ENCODE measurements at regions of chr17 and their contacts with region 1.

Region 1: GRCh38 chr17:44210342-44211192 is 8.9 kb downstream of the UBTF start:
- DNase-seq: peak; percentile 96
- ATAC-seq: peak; percentile 84
- H3K4me3 Mint-ChIP-seq: peak overlapping the region; percentile 79
- H3K27ac Mint-ChIP-seq: peak overlapping the region; percentile 98
- H3K4me1 Mint-ChIP-seq: peaks cover 60% of the 10 kb centered on the region
- H3K27me3 Mint-ChIP-seq: no peaks in the 10 kb centered on the region

Region 2: DNA sequence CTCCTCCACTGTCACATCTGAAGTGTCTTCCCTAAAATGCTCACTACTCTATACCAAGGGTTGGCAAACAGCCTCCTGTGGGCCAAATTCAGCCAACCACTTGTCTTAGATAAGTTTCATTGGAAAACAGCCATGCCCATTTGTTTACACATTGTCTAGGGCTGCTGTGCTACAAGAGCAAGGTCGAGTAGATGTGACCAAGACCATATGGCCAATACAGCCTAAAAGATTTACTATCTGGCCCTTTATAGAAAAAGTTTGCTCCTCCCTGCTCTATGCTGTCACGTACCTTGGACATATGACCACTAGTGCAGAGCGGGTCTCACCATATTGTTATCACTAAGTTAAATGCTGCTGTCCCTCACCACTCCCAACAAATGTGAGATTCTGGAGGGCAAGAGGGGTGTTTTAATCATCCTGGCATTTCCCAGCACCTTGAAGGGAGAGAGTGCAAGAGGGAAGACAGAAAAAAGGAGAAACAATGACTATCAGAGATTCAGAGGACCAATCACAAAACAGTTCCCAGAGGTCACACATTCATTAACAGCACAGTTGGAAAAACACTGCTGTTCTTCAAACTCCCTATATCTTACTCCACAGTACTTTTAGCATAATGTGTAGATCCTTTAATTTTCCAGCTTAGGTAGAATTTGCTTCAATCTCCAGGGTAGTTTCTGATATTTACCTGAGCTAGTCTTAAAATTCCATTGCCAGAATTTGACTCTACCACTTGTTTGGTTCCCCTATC is 157.3 kb before region 1 on chr17:
- CTCF ChIA-PET with region 1: no interaction called
- POLR2A ChIA-PET with region 1: no interaction called
- intact Hi-C with region 1: no loop called
- DNase-seq: no peak
- ATAC-seq: no peak
- H3K4me3 Mint-ChIP-seq: no peak overlapping the region
- H3K27ac Mint-ChIP-seq: peak overlapping the region; percentile 26
- H3K4me1 Mint-ChIP-seq: peaks cover 8% of the 10 kb centered on the region
- H3K27me3 Mint-ChIP-seq: no peaks in the 10 kb centered on the region

Region 3: GRCh38 chr17:44199553-44200477 is 10.8 kb before region 1 on chr17 and contains the start of gene ATXN7L3:
- CTCF ChIA-PET with region 1: interaction called, 21 read pairs
- POLR2A ChIA-PET with region 1: interaction called, 5 read pairs
- intact Hi-C with region 1: loop called in 1 of 2 experiments (anchors 1 kb)
- DNase-seq: peak; percentile 100
- ATAC-seq: peak; percentile 84
- H3K4me3 Mint-ChIP-seq: peak within 1 kb of the TSS; percentile 88
- H3K27ac Mint-ChIP-seq: peak within 1 kb of the TSS; percentile 94
- H3K4me1 Mint-ChIP-seq: peaks cover 38% of the 10 kb centered on the region
- H3K27me3 Mint-ChIP-seq: no peaks in the 10 kb centered on the region
- total RNA-seq, gene ATXN7L3: 66.3 to 70.6 TPM

Region 4: GRCh38 chr17:44331249-44331760 is 120.7 kb after region 1 on chr17:
- CTCF ChIA-PET with region 1: interaction called, 43 read pairs
- POLR2A ChIA-PET with region 1: interaction called, 4 read pairs
- intact Hi-C with region 1: loop called in 1 of 2 experiments (anchors 1 kb)
- DNase-seq: peak; percentile 82
- ATAC-seq: peak; percentile 64
- H3K4me3 Mint-ChIP-seq: no peak overlapping the region
- H3K27ac Mint-ChIP-seq: no peak overlapping the region
- H3K4me1 Mint-ChIP-seq: peaks cover 12% of the 10 kb centered on the region
- H3K27me3 Mint-ChIP-seq: no peaks in the 10 kb centered on the region

Region 5: GRCh38 chr17:44350733-44351226 is 140.2 kb after region 1 on chr17:
- CTCF ChIA-PET with region 1: interaction called, 19 read pairs
- POLR2A ChIA-PET with region 1: interaction called, 3 read pairs
- intact Hi-C with region 1: loop called (anchors 1 to 2 kb)
- DNase-seq: peak; percentile 86
- ATAC-seq: peak; percentile 86
- H3K4me3 Mint-ChIP-seq: no peak overlapping the region
- H3K27ac Mint-ChIP-seq: no peak overlapping the region
- H3K4me1 Mint-ChIP-seq: peaks cover 4% of the 10 kb centered on the region
- H3K27me3 Mint-ChIP-seq: no peaks in the 10 kb centered on the region

Region 6: DNA sequence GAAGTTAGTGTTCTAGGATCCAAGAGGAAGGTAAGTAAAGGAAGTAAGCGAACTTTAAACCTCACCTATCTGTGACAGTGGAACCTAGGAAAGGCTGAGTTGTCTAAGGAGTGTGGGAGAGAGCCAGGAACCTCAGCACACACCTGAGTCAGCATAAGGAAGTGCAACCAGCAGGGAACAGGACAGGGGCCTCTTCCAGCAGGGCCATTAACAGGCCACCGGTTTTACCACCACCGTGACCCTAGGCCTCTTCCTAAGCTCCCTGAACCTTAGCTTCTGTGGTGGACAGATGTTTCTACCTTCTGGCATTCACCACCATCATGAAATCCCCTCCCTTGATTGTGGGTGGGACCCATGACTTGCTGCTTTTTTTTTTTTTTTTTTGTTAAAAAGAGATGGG is 319.3 kb after region 1 on chr17:
- CTCF ChIA-PET with region 1: no interaction called
- POLR2A ChIA-PET with region 1: no interaction called
- intact Hi-C with region 1: no loop called
- DNase-seq: no peak
- ATAC-seq: no peak
- H3K4me3 Mint-ChIP-seq: no peak overlapping the region
- H3K27ac Mint-ChIP-seq: no peak overlapping the region
- H3K4me1 Mint-ChIP-seq: peaks cover 8% of the 10 kb centered on the region
- H3K27me3 Mint-ChIP-seq: no peaks in the 10 kb centered on the region